Activated CD4-positive, alpha-beta T cell treated with anti-CD3 and anti-CD28 coated beads for 36 hours (primary cell): ENCODE measurements at regions of chr10 and their contacts with region 1.

Region 1: DNA sequence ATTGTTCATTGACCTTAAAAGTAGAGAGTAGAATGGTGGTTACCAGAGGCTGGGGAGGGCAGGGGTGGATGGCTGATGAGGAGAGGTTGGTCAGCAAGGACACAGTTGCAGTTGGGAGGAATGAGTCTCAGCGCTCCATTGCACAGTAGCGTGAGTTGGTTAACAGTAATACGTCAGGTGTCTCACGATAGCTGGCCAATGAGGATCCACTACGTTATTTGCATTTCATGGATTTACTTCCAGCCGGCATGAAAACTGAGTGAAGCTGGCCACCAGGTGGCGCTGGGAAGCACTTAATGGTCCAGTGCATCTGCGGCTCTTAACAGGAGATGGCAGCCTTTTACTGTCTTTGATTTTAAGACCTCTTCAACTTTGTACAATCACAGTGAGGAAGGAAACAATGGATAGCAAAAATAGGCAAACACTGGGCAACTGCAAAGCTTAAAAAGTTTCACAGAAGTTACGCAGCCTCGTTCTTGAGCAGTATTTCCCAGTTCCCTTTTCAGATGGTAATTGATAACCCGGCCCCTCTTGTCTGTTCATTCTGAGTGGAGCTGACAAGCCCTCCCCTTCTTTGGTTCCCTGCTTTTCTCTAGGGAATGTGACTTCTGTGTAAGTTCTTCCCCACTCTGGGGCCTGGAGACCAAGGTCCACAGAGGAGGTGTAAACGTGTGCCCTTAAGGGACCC is 23.7 kb downstream of the AKR1E2 start:
- DNase-seq: peak; percentile 95
- ATAC-seq: peak; percentile 95
- H3K4me3 Mint-ChIP-seq: no peak overlapping the region
- H3K27ac Mint-ChIP-seq: peak overlapping the region; percentile 55
- H3K4me1 Mint-ChIP-seq: peaks cover 11% of the 10 kb centered on the region
- H3K27me3 Mint-ChIP-seq: no peaks in the 10 kb centered on the region

Region 2: GRCh38 chr10:4813023-4813422 is 36.7 kb before region 1 on chr10:
- CTCF ChIA-PET with region 1: interaction called, 29 read pairs
- POLR2A ChIA-PET with region 1: no interaction called
- intact Hi-C with region 1: loop called in 1 of 2 experiments (anchors 1 kb)
- DNase-seq: peak; percentile 13
- ATAC-seq: no peak
- H3K4me3 Mint-ChIP-seq: no peak overlapping the region
- H3K27ac Mint-ChIP-seq: no peak overlapping the region
- H3K4me1 Mint-ChIP-seq: no peaks in the 10 kb centered on the region
- H3K27me3 Mint-ChIP-seq: peaks cover 6% of the 10 kb centered on the region

Region 3: DNA sequence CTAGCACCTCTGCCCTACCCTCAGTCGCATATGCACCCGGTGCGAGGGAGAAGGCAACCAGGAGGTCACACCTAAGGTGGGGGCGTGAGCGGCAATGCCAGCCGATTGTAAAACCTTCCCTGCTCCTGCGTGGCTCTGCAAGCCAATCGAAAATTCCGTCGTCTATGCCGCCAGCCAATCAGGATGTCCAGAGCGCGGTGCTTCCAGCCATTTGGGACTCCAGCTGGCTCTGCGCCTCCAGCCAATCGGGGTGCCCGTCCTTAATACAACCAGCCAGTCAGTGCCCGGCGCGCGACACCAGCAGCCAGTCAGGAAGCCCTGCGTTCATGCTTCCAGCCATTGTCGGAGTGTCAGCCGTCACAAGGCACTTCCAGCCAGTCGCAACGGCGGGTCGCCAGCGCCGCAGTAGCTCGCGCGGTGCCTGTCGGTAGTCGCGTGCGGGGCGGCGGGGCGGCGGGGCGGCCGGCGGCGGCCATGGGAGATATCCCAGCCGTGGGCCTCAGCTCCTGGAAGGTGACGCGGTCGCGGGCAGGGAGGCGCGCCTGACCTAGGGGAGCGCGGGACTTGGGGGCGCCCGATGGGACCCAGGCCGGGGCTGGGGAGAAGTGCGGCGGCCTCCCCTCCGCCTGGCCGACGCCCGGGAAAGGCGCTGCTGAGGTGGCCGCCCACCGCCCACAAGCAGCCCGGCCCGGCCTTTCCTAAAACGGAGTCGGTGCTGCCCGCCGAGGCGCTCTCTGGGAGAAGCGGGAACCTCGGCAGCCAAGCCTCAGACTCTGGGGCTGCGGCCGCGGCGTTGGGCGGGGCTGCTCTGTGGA is 23.6 kb before region 1 on chr10 and contains the start of gene AKR1E2:
- CTCF ChIA-PET with region 1: interaction called, 16 read pairs
- POLR2A ChIA-PET with region 1: interaction called, 6 read pairs
- intact Hi-C with region 1: no loop called
- DNase-seq: peak; percentile 93
- ATAC-seq: peak; percentile 94
- H3K4me3 Mint-ChIP-seq: peak within 1 kb of the TSS; percentile 77
- H3K27ac Mint-ChIP-seq: peak within 1 kb of the TSS; percentile 83
- H3K4me1 Mint-ChIP-seq: peaks cover 27% of the 10 kb centered on the region
- H3K27me3 Mint-ChIP-seq: peaks cover 9% of the 10 kb centered on the region
- total RNA-seq, gene AKR1E2: 9.8 to 13.4 TPM

Region 4: DNA sequence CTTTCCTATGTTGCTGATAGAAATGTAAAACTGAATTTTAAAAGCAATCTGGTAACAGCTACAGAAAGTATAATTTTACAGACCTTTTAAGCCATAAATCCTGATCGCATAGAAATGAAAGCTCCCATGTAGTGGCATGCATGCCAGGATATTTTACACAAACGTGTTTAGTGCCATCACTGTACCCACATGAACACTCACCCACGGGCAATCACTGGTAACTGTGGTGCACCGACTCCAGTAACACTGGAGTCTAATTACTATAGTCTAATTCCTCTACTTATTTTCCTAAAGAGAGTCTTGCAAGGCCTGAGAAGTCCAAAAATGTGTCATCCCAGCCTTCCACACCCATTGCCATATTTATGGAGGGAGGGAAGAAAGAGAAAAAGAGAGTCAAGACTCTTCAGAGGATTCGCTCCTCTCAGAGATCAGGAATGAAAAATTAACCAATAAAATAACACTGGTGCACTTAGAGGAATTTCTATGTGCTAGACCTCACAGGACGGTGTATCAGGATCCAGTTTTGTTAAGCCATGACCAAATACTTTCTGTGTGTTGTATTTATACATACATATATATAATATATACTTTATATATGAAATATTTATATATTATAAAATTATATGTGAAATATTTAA is 64.6 kb after region 1 on chr10:
- CTCF ChIA-PET with region 1: no interaction called
- POLR2A ChIA-PET with region 1: no interaction called
- intact Hi-C with region 1: no loop called
- DNase-seq: no peak
- ATAC-seq: no peak
- H3K4me3 Mint-ChIP-seq: no peak overlapping the region
- H3K27ac Mint-ChIP-seq: no peak overlapping the region
- H3K4me1 Mint-ChIP-seq: no peaks in the 10 kb centered on the region
- H3K27me3 Mint-ChIP-seq: no peaks in the 10 kb centered on the region

Region 5: GRCh38 chr10:4981722-4982471 is 132.2 kb after region 1 on chr10:
- CTCF ChIA-PET with region 1: interaction called, 34 read pairs
- POLR2A ChIA-PET with region 1: no interaction called
- intact Hi-C with region 1: loop called (anchors 1 kb)
- DNase-seq: no peak
- ATAC-seq: no peak
- H3K4me3 Mint-ChIP-seq: no peak overlapping the region
- H3K27ac Mint-ChIP-seq: no peak overlapping the region
- H3K4me1 Mint-ChIP-seq: no peaks in the 10 kb centered on the region
- H3K27me3 Mint-ChIP-seq: no peaks in the 10 kb centered on the region

Region 6: GRCh38 chr10:5283305-5284158 is 433.8 kb after region 1 on chr10:
- CTCF ChIA-PET with region 1: interaction called, 37 read pairs
- POLR2A ChIA-PET with region 1: no interaction called
- intact Hi-C with region 1: loop called (anchors 1 kb)
- DNase-seq: peak; percentile 78
- ATAC-seq: peak; percentile 83
- H3K4me3 Mint-ChIP-seq: no peak overlapping the region
- H3K27ac Mint-ChIP-seq: peak overlapping the region; percentile 74
- H3K4me1 Mint-ChIP-seq: peaks cover 21% of the 10 kb centered on the region
- H3K27me3 Mint-ChIP-seq: peaks cover 7% of the 10 kb centered on the region

Region 7: DNA sequence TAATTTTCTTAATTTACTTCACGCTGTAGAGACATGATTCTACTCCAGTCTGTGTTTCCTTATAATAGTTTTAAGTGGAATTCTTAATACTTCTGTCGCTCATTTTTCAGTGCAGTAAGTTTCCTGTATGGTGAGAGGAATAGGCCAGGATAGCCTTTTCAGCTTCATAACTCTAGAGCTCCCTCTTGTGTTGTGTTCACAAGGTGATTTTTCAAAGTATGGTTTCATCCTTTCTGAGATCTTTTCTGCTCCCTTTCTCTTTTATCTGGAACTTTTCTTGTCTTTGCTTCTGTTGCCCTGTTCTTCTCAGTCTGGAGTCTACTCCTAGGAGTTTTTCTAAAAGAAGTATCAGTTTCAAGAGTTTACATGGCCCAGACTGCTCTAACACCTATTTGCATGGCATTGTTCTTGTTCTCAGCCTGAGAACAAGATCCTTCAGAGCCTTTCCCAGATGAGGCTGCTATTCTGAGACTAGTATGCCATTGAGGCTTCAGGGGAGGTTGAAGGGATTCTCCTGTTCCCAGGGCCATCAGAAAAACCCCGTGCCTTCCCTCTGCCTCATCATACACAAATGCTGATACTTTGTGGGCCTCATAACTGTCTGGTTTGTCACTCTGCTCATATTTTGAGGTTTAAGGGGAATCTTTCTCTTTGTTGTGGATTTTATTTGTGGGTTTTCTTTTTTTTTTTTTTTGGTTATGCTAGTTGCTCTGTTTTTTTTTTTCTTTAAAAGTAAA is 584.5 kb after region 1 on chr10:
- CTCF ChIA-PET with region 1: interaction called, 8 read pairs
- POLR2A ChIA-PET with region 1: no interaction called
- intact Hi-C with region 1: loop called (anchors 1 kb)
- DNase-seq: no peak
- ATAC-seq: peak; percentile 57
- H3K4me3 Mint-ChIP-seq: no peak overlapping the region
- H3K27ac Mint-ChIP-seq: no peak overlapping the region
- H3K4me1 Mint-ChIP-seq: peaks cover 13% of the 10 kb centered on the region
- H3K27me3 Mint-ChIP-seq: no peaks in the 10 kb centered on the region